ENCODE measurements at regions of chr7 and their contacts with region 1.

Region 1: DNA sequence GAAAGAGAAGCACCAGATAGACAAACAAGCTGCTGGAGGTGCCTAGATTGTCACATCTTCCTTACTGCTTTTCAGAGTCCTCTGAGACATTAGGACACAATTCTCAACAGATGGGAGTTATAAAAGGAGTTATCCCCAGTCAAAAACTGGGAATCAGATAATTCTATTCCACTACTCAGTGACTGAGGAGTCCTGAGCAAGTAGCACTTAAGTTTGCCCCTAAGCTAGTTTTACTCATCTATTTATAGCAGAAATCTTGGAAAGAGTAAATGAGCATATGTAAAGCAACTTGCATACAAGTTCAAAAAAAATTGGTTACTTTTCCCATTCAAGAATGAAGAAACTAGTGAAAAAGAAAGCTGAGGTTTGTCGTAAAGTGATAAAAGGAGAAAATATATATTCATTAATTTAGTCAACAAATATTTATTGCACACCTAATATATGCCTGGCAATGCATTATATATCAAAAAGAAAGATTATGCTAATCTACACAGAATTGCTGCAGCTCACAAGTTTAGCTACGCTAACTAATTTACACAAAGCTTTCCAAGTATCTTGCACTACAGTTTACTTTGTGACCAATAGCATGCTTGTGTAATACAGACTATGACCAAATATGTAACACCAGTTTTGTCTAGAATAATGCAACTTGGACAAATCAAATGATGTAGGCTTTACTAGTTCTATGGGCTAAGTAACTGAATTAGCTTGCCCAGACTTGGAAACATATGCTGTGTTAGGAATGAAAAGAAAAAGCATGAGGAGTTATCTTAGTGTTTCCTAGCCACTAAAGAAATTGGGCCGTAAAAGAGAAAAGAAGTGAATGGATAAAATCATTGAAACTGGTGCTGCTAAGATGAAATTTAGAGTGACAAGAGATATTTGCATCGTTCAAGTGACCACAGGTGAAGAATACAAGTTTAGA is 106.3 kb downstream of the GRM3 start:
- DNase-seq: no peak
- H3K4me3 ChIP-seq: no peak overlapping the region
- H3K27ac ChIP-seq: no peak overlapping the region
- H3K4me1 ChIP-seq: no peaks in the 10 kb centered on the region
- H3K27me3 ChIP-seq: peaks cover 2% of the 10 kb centered on the region
- CTCF ChIP-seq: no peak

Region 2: DNA sequence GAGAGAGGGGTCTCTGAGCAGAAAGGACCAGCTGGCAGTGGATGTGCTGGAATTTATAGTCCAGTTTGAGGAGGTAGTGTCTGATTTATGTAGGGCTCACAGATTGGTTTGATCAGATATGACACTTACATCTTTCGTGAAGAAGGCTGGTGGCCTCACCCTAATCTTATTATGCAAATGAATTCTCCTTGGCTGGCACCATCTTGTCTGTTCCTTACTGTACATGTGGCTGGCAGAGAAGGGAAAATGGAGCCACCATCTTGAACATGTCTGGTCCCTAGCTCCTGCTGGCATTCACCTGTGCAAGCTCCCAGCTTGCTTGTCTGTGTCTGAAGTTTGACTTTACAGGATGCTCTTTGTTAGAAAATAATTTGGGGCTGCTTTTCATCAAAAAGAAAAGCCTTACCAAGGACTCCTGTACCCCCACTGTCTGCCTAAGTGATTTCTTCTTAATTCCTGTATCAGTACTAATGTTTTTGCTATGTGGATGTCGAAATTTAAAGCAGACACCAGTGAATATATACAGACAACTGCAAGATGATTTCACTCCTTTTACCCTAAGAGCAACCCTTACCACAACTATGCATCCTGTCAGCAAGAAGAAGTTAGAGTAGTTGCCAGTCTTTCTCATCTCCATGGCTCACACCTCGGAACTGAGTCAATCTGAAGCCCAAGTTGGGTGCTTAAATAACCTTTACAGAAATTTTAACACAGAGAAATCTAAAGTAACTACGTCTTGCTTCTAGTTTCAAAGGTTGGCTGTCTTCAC is 1241.2 kb before region 1 on chr7:
- CTCF ChIA-PET with region 1: no interaction called
- dilution Hi-C with region 1: no loop called
- in situ Hi-C with region 1: no loop called
- intact Hi-C with region 1: no loop called
- DNase-seq: peak; percentile 67
- H3K4me3 ChIP-seq: no peak overlapping the region
- H3K27ac ChIP-seq: no peak overlapping the region
- H3K4me1 ChIP-seq: no peaks in the 10 kb centered on the region
- H3K27me3 ChIP-seq: peaks cover 2% of the 10 kb centered on the region
- CTCF ChIP-seq: no peak

Region 3: GRCh38 chr7:86687831-86688230 is 62.2 kb before region 1 on chr7:
- CTCF ChIA-PET with region 1: no interaction called
- dilution Hi-C with region 1: loop called (anchors 5 kb)
- in situ Hi-C with region 1: no loop called
- intact Hi-C with region 1: no loop called
- DNase-seq: no peak
- H3K4me3 ChIP-seq: no peak overlapping the region
- H3K27ac ChIP-seq: no peak overlapping the region
- H3K4me1 ChIP-seq: no peaks in the 10 kb centered on the region
- H3K27me3 ChIP-seq: no peaks in the 10 kb centered on the region
- CTCF ChIP-seq: no peak

Measured in mammary epithelial cell (primary cell).